ENCODE measurements at regions of chrX and their contacts with region 1.

Region 1: GRCh38 chrX:120250522-120251271 is at the start of gene ZBTB33:
- DNase-seq: peak; percentile 92
- H3K4me3 Mint-ChIP-seq: peak within 1 kb of the TSS; percentile 100
- H3K27ac Mint-ChIP-seq: peak within 1 kb of the TSS; percentile 99
- H3K4me1 Mint-ChIP-seq: no peaks in the 10 kb centered on the region
- H3K27me3 Mint-ChIP-seq: no peaks in the 10 kb centered on the region
- CTCF ChIP-seq: peak; percentile 66
- total RNA-seq, gene ZBTB33: 22.7 and 24.9 TPM in 2 replicates

Region 2: DNA sequence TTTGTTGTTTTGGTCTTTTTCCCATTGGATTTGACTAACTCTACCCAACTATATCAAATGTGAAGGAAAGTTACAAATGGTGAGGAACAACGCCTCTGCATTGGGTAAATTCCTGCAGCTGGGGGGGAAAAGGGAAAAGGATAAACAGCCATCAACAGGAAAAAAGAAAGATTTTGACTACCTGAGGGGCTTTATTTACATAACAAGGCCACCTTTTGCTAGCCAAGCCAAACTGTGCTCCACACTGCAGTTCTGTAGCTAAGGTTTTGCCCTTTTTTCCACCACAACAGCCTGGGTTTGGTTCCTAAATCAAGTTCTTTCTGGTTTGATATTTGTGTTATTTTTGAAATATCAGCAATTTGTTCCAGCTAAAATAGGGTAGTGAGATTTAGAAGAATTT is 214.0 kb before region 1 on chrX:
- CTCF ChIA-PET with region 1: no interaction called
- intact Hi-C with region 1: no loop called
- DNase-seq: no peak
- H3K4me3 Mint-ChIP-seq: no peak overlapping the region
- H3K27ac Mint-ChIP-seq: no peak overlapping the region
- H3K4me1 Mint-ChIP-seq: no peaks in the 10 kb centered on the region
- H3K27me3 Mint-ChIP-seq: no peaks in the 10 kb centered on the region
- CTCF ChIP-seq: no peak

Region 3: DNA sequence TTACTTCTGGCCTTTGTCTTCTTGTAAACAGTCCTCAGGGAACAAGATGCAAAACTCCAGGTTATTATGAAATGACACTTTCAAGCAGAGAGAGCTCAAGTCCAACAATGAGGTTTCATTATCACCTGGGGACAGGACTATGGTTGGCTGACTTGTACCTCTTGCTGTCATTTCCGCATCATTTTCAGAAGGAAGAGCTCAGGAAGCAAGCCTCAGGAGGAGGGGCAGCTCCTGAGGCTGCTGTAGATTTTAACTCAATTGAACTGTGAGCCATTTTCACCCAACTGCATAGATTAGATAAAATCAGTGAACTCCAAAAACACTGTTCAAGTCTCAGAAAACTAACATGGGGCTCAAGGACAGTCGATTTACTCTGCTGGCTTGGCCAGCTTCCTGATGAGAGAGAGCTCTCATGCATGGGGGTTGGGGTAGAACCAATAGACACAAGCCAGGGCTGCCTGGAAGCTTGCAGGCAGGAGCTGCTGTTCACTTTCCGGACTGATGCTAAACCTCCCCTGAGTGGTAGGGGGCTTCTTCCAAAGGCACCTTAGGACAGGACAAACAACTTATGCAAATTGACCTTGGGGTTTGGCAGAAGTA is 36.9 kb after region 1 on chrX:
- CTCF ChIA-PET with region 1: no interaction called
- intact Hi-C with region 1: no loop called
- DNase-seq: no peak
- H3K4me3 Mint-ChIP-seq: no peak overlapping the region
- H3K27ac Mint-ChIP-seq: no peak overlapping the region
- H3K4me1 Mint-ChIP-seq: no peaks in the 10 kb centered on the region
- H3K27me3 Mint-ChIP-seq: peaks cover 32% of the 10 kb centered on the region
- CTCF ChIP-seq: no peak

Region 4: GRCh38 chrX:120299928-120300327 is 49.2 kb after region 1 on chrX:
- CTCF ChIA-PET with region 1: interaction called, 3 read pairs
- intact Hi-C with region 1: loop called (anchors 2 kb)
- DNase-seq: peak; percentile 23
- H3K4me3 Mint-ChIP-seq: no peak overlapping the region
- H3K27ac Mint-ChIP-seq: no peak overlapping the region
- H3K4me1 Mint-ChIP-seq: peaks cover 8% of the 10 kb centered on the region
- H3K27me3 Mint-ChIP-seq: no peaks in the 10 kb centered on the region
- CTCF ChIP-seq: no peak

Region 5: DNA sequence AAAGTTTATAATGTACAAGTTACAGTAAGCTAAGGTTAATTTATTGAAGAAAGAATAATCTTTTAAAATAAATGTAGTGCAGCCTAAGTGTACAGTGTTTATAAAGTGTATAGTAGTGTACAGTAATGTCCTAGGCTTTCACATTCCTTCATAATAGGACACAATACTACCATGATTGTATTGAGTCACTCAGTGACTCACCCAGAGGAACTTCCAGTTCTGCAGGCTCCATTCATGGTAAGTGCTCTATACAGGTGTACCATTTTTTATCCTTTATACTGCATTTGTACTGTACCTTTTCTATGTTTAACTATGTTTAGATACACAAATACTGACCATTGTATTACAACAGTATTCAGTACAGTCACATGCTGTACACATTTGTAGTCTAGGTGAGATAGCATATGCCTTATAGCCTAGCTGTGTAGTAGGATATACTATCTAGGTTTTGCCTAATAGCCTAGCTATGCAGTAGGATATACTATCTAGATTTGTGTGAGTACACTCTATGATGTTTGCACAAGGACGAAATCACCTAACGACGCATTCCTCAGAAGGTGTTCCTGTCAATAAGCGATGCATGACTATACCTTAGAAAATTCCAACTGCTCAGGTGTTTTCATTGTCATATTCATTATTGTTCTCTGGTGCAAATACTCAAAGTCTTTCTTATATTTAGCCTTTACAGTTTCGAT is 66.0 kb after region 1 on chrX:
- CTCF ChIA-PET with region 1: no interaction called
- intact Hi-C with region 1: loop called (anchors 5 kb)
- DNase-seq: peak; percentile 56
- H3K4me3 Mint-ChIP-seq: no peak overlapping the region
- H3K27ac Mint-ChIP-seq: no peak overlapping the region
- H3K4me1 Mint-ChIP-seq: peaks cover 12% of the 10 kb centered on the region
- H3K27me3 Mint-ChIP-seq: no peaks in the 10 kb centered on the region
- CTCF ChIP-seq: no peak

Region 6: DNA sequence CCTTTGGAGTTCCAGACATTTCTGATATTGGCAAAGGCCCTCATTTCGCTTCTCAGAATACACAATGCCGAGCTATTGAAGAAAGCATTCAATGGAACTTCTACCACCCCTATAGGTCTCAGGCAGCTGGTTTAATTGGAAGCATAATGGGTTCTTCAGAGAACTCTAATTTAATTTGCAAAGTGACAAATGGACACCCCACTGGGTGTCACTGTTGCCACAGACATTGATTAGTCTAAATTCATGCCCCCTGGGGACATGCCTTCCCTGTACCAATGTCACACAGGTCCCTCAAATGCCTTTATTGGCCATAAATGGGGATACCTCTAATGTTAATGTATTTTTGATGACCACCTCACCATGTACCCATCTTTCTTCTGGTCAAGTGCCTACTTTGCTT is 83.5 kb after region 1 on chrX:
- CTCF ChIA-PET with region 1: no interaction called
- intact Hi-C with region 1: no loop called
- DNase-seq: no peak
- H3K4me3 Mint-ChIP-seq: no peak overlapping the region
- H3K27ac Mint-ChIP-seq: no peak overlapping the region
- H3K4me1 Mint-ChIP-seq: no peaks in the 10 kb centered on the region
- H3K27me3 Mint-ChIP-seq: no peaks in the 10 kb centered on the region
- CTCF ChIP-seq: no peak

Region 7: DNA sequence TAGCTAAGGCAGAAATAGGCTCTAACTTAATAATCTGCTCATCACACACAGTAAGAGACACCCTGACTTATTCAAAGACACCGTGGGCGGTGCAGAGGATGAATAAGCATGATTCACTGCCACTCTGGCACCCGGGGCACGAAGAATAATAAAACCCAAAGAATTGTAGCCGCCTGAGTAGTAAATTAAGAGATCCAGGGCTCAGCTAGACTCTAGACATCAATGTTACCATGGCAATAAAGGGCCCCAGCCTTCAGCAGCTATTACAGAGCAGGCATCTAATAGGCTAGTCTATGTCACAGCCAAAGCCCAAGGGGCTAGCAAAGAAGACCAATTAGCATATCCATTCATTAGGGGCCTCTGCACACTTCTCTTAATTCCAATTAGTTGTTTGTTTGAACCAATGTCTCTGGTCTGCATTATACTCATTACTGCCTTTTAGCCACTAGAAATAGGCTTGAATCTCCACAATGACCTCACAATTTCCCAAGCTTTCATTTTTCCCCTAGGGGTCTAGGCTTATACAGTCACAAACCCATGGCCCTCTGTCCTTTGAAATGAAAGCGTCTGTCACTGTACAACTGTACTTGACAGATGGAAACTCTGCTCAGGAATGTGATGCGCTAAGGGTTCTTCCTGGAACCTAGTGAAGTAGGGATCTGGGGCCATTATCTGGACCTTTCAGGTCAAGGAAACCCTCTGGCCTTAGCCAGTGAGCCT is 108.2 kb after region 1 on chrX:
- CTCF ChIA-PET with region 1: no interaction called
- intact Hi-C with region 1: no loop called
- DNase-seq: no peak
- H3K4me3 Mint-ChIP-seq: no peak overlapping the region
- H3K27ac Mint-ChIP-seq: no peak overlapping the region
- H3K4me1 Mint-ChIP-seq: no peaks in the 10 kb centered on the region
- H3K27me3 Mint-ChIP-seq: peaks cover 40% of the 10 kb centered on the region
- CTCF ChIP-seq: no peak

Region 8: GRCh38 chrX:120468825-120469525 is 218.3 kb after region 1 on chrX and contains the start of gene LAMP2:
- CTCF ChIA-PET with region 1: no interaction called
- intact Hi-C with region 1: loop called (anchors 5 kb)
- DNase-seq: peak; percentile 88
- H3K4me3 Mint-ChIP-seq: peak within 1 kb of the TSS; percentile 87
- H3K27ac Mint-ChIP-seq: peak within 1 kb of the TSS; percentile 77
- H3K4me1 Mint-ChIP-seq: no peaks in the 10 kb centered on the region
- H3K27me3 Mint-ChIP-seq: no peaks in the 10 kb centered on the region
- CTCF ChIP-seq: no peak
- total RNA-seq, gene LAMP2: 120 and 132 TPM in 2 replicates